MCF 10A (cell line): ENCODE measurements at regions of chr2 and their contacts with region 1.

Region 1: GRCh38 chr2:230326453-230327417 is at the start of gene SP140L:
- DNase-seq: peak; percentile 80
- H3K4me3 Mint-ChIP-seq: peak within 1 kb of the TSS; percentile 88
- H3K27ac Mint-ChIP-seq: peak within 1 kb of the TSS; percentile 97
- H3K4me1 Mint-ChIP-seq: peaks cover 15% of the 10 kb centered on the region
- H3K27me3 Mint-ChIP-seq: no peaks in the 10 kb centered on the region
- CTCF ChIP-seq: no peak
- total RNA-seq, gene SP140L: 20.3 and 33.2 TPM in 2 replicates

Region 2: DNA sequence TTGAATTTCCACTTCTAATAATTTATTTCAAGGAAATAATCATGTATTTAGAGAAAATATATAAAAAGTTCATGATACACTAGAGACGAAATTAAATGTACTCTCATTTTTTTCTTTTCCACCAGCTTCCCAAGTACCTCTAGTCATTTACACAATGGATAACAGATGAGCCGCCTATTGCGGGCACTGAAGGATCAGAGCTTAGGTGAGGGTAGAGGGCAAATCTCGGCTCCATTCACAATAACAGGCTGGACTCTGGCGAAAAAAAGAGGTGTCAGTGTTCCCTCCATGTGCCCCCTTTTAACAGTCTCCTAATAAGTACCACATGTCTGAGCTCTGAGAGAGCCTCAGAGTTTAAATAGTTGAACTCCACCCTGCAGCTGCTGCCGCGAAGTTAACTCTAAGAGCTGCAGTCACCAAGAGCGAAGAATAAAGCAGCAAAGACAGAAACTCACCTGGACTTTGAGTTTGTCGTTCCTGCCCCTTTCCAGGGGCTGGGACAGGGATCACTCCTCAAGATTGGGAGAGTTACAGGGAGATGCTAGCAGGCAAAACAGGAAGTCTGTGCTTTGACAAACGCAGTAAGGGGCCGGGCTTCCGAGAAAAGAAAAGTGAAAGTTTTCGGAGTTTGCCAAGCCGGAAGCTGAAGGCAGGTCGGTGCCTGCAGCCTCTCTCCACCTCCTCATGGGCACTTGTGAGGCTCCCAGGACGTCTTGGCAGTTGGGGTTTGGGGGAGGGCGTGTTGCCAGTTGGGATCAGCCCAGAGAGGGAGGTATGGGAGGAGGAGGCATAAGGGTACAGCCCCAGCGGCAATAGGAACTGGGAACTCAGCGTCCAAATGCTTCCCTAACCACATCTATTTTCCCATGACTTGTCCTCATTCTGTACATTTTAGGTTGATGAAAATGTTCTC is 107.1 kb before region 1 on chr2 and contains the start of gene SP110:
- CTCF ChIA-PET with region 1: no interaction called
- POLR2A ChIA-PET with region 1: interaction called, 24 read pairs
- intact Hi-C with region 1: loop called (anchors 5 kb)
- DNase-seq: peak; percentile 97
- H3K4me3 Mint-ChIP-seq: peak within 1 kb of the TSS; percentile 87
- H3K27ac Mint-ChIP-seq: peak within 1 kb of the TSS; percentile 80
- H3K4me1 Mint-ChIP-seq: peaks cover 14% of the 10 kb centered on the region
- H3K27me3 Mint-ChIP-seq: no peaks in the 10 kb centered on the region
- CTCF ChIP-seq: no peak
- total RNA-seq, gene SP110: 11.9 and 17.1 TPM in 2 replicates

Region 3: DNA sequence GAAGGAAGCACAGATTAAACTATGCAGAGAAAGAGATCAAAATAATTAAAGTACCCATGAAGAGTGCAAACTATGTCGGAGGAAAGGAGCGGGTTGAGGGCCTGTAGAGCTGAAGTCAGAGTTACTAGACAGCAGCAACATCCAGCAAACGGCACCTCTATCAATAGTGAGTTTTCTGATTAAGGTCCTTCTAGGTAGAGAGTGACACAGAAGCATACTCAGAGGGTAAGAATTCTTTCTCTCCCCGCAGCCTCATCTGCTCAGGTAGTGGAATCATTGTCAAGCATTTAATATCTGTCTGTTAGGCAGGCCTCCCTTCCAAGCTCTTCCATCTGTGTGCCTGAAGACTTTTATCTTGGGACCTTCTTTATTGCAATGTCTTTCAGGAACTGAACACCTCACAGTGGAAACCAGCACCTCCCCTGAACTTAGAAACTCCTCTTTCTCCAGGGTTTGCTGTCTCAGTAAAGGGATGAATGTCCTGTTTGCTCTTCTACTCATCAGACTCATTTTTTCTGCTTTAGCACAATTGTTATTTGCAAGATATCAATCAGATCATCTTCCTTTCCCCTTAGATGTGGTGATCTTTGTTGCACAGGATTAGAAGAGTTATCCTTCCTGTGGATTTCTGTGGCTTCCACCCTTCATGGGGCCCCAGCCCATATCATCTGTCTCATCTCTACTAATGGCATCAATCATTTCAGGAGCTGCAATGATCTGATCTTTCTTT is 72.4 kb before region 1 on chr2:
- CTCF ChIA-PET with region 1: no interaction called
- POLR2A ChIA-PET with region 1: no interaction called
- intact Hi-C with region 1: no loop called
- DNase-seq: no peak
- H3K4me3 Mint-ChIP-seq: no peak overlapping the region
- H3K27ac Mint-ChIP-seq: no peak overlapping the region
- H3K4me1 Mint-ChIP-seq: no peaks in the 10 kb centered on the region
- H3K27me3 Mint-ChIP-seq: no peaks in the 10 kb centered on the region
- CTCF ChIP-seq: no peak

Region 4: DNA sequence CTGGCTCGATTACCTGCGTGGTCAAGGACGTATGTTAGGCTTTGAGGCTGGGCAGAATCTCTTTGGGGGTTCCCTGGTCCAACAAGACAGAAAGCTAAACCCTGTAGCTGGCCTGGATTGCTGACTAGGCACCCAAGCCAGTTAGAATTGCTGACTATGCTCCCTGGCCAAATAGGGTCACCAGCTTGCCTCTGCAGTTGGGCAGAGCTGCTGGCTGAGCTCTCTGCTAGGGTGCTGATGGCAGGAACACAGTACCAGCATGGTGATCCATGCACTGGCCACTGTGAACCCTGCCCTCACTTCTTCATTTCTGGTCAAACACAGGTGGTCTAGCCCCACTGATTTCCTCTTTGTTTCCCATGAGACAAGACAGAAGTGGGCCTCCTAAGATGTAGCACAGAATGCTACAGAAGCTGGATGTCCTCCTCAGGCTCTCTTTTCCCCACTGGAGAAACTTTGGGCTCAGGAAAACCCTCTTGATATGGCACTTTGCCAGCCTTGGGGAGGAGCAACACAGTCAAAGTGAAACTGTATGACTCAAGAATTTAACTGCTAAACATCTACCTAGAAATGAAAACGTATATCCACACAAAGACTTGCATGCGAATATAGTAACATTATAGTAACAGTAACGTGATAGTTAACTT is 21.0 kb after region 1 on chr2:
- CTCF ChIA-PET with region 1: no interaction called
- POLR2A ChIA-PET with region 1: interaction called, 12 read pairs
- intact Hi-C with region 1: no loop called
- DNase-seq: peak; percentile 49
- H3K4me3 Mint-ChIP-seq: no peak overlapping the region
- H3K27ac Mint-ChIP-seq: no peak overlapping the region
- H3K4me1 Mint-ChIP-seq: peaks cover 3% of the 10 kb centered on the region
- H3K27me3 Mint-ChIP-seq: no peaks in the 10 kb centered on the region
- CTCF ChIP-seq: no peak